ENCODE measurements at regions of chr3 and their contacts with region 1.

Region 1: DNA sequence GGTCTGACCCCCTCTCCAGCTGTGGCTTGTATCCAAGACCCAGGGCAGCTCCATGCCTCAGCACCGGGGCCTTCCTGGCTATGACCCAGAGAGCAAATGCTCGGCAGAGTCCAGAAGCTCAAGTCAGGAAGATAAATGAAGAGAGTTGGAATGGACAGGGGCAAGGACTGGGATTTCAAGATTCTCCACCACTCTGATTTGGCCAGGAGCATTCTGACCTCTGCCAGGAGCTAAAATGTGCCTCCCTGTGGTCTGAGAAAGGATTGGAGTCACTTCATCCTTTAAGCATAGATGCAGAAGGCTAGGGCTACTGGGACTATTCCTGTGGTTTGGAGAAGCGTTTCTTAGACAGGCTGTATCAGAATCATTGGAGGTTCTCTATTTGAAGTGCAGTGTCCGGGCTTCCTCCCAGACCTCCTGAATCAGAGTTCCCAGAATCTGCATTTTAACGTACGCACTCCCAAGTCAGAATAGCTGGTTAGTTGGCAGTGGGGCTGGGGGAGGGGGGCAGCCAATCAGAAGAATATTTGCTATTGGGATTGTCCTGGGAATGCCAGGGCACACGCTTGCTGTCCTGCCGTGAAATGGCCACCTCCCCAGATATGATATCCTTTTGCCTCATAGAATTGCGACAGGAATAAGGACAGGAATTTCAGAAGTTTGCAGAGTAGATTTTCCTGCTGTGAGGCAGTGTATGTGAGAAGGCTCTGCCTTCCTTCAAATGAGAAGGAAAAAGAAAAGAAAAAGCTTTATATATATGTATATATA is 57.4 kb downstream of the HRH1 start:
- DNase-seq: no peak
- ATAC-seq: peak; percentile 37; the same call in 1 of the 2 replicates
- H3K4me3 ChIP-seq: no peak overlapping the region
- H3K27ac ChIP-seq: no peak overlapping the region
- H3K4me1 ChIP-seq: peaks cover 20% of the 10 kb centered on the region
- H3K27me3 ChIP-seq: no peaks in the 10 kb centered on the region
- CTCF ChIP-seq: peak; percentile 20; the same call in 1 of the 2 replicates

Region 2: GRCh38 chr3:11172105-11172690 is 39.5 kb before region 1 on chr3:
- CTCF ChIA-PET with region 1: interaction called, 13 read pairs
- POLR2A ChIA-PET with region 1: no interaction called
- intact Hi-C with region 1: no loop called
- DNase-seq: no peak
- ATAC-seq: no peak
- H3K4me3 ChIP-seq: no peak overlapping the region
- H3K27ac ChIP-seq: no peak overlapping the region
- H3K4me1 ChIP-seq: no peaks in the 10 kb centered on the region
- H3K27me3 ChIP-seq: no peaks in the 10 kb centered on the region
- CTCF ChIP-seq: no peak

Region 3: GRCh38 chr3:11400213-11400612 is 188.5 kb after region 1 on chr3:
- CTCF ChIA-PET with region 1: no interaction called
- POLR2A ChIA-PET with region 1: no interaction called
- intact Hi-C with region 1: no loop called
- DNase-seq: no peak
- ATAC-seq: no peak
- H3K4me3 ChIP-seq: no peak overlapping the region
- H3K27ac ChIP-seq: no peak overlapping the region
- H3K4me1 ChIP-seq: no peaks in the 10 kb centered on the region
- H3K27me3 ChIP-seq: no peaks in the 10 kb centered on the region
- CTCF ChIP-seq: no peak

Measured in PC-3 (cell line).